H1 (cell line): ENCODE measurements at regions of chr12 and their contacts with region 1.

Region 1: GRCh38 chr12:12704593-12705230 is 8.7 kb upstream of the GPR19 start:
- DNase-seq: no peak
- H3K4me3 ChIP-seq: no peak overlapping the region
- H3K27ac ChIP-seq: no peak overlapping the region
- H3K4me1 ChIP-seq: peaks cover 0 to 5% (median 2%) of the 10 kb centered on the region in 4 experiments; a peak in 4 of 7 replicates
- H3K27me3 ChIP-seq: no peaks in the 10 kb centered on the region
- CTCF ChIP-seq: peak; percentile 44 to 99 (median 99)
- EP300 ChIP-seq: no peak
- POLR2A ChIP-seq: no peak
- RAD21 ChIP-seq: peak; percentile 100

Region 2: GRCh38 chr12:12628013-12628412 is 76.7 kb before region 1 on chr12:
- CTCF ChIA-PET with region 1: no interaction called
- POLR2A ChIA-PET with region 1: no interaction called
- DNase-seq: no peak
- H3K4me3 ChIP-seq: no peak overlapping the region
- H3K27ac ChIP-seq: no peak overlapping the region
- H3K4me1 ChIP-seq: peaks cover 0 to 4% (median 2%) of the 10 kb centered on the region in 4 experiments; a peak in 3 of 7 replicates
- H3K27me3 ChIP-seq: no peaks in the 10 kb centered on the region
- CTCF ChIP-seq: no peak
- EP300 ChIP-seq: no peak
- POLR2A ChIP-seq: no peak
- RAD21 ChIP-seq: no peak

Region 3: DNA sequence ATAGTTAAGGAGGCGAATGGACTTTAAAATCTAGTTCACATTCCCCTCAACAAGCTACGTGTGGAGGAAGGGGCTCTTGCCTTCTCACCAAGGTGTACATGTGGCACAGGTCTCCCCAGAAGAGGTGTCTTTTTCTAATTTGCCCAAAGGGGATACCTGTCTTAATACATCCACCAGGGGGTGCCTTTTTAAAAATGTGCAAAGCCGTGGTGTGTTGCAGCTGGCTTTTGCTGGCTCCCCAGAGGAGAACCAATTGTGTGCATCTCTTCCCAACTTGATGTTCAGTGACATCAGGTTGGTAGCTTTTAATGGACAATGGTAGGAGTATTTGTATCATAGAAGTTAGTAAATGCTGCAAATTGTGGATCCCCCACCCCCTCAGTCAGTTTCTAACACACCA is 59.2 kb before region 1 on chr12:
- CTCF ChIA-PET with region 1: interaction called, 11 read pairs
- POLR2A ChIA-PET with region 1: no interaction called
- DNase-seq: no peak
- H3K4me3 ChIP-seq: no peak overlapping the region
- H3K27ac ChIP-seq: no peak overlapping the region
- H3K4me1 ChIP-seq: peaks cover 0 to 19% (median 1%) of the 10 kb centered on the region in 4 experiments; a peak in 2 of 7 replicates
- H3K27me3 ChIP-seq: no peaks in the 10 kb centered on the region
- CTCF ChIP-seq: peak; percentile 6 to 70 (median 62)
- EP300 ChIP-seq: no peak
- POLR2A ChIP-seq: no peak
- RAD21 ChIP-seq: peak; percentile 53 to 68

Region 4: GRCh38 chr12:12661086-12661485 is 43.6 kb before region 1 on chr12:
- CTCF ChIA-PET with region 1: interaction called, 14 read pairs
- POLR2A ChIA-PET with region 1: interaction called, 3 read pairs
- DNase-seq: no peak
- H3K4me3 ChIP-seq: peak overlapping the region in 1 of 4 experiments; percentile 24; a peak in 1 of 8 replicates
- H3K27ac ChIP-seq: no peak overlapping the region
- H3K4me1 ChIP-seq: peaks cover 6 to 25% (median 18%) of the 10 kb centered on the region in 4 experiments
- H3K27me3 ChIP-seq: no peaks in the 10 kb centered on the region
- CTCF ChIP-seq: no peak
- EP300 ChIP-seq: no peak
- POLR2A ChIP-seq: no peak
- RAD21 ChIP-seq: no peak

Region 5: GRCh38 chr12:12684375-12685106 is 20.2 kb before region 1 on chr12:
- CTCF ChIA-PET with region 1: interaction called, 8 read pairs
- POLR2A ChIA-PET with region 1: interaction called, 11 read pairs
- DNase-seq: peak; percentile 80 to 85
- H3K4me3 ChIP-seq: peak overlapping the region; percentile 71 to 87 (median 78)
- H3K27ac ChIP-seq: peak overlapping the region; percentile 81
- H3K4me1 ChIP-seq: peaks cover 5 to 14% (median 7%) of the 10 kb centered on the region in 4 experiments; a peak in 6 of 7 replicates
- H3K27me3 ChIP-seq: peaks cover 0 to 3% (median under 1%) of the 10 kb centered on the region in 4 experiments; a peak in 2 of 7 replicates
- CTCF ChIP-seq: no peak
- EP300 ChIP-seq: peak in 1 of 2 experiments; percentile 84; a peak in 1 of 3 replicates
- POLR2A ChIP-seq: peak; percentile 58 to 90
- RAD21 ChIP-seq: no peak